ENCODE measurements at regions of chr6 and their contacts with region 1.

Region 1: GRCh38 chr6:132715204-132715603 is 1.3 kb upstream of the VNN1 start:
- DNase-seq: peak; percentile 54 to 58
- H3K4me3 ChIP-seq: no peak overlapping the region
- H3K27ac ChIP-seq: no peak overlapping the region
- H3K4me1 ChIP-seq: no peaks in the 10 kb centered on the region
- H3K27me3 ChIP-seq: no peaks in the 10 kb centered on the region
- CTCF ChIP-seq: peak; percentile 55 to 77 (median 74)
- EP300 ChIP-seq: no peak
- POLR2A ChIP-seq: no peak
- RAD21 ChIP-seq: peak; percentile 90 to 95

Region 2: DNA sequence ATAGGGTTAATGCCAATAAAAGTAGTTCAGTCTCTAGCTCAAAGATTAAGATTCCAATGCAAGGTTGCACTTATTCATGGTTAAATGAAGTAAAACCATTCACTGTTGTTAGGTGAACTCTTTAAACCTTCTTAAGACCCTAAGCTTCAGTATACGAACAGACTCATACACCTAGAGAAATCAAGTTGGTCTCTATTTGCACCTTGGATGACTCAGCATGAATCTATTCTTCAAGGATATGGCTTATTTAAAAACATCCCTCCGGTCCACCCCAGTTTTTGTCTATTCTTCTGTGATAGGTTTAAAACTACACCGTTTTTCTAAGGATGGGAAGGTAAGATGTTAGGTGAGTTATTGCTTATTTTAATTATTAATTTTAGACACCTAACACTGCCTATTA is 178.1 kb before region 1 on chr6:
- CTCF ChIA-PET with region 1: interaction called, 11 read pairs
- POLR2A ChIA-PET with region 1: no interaction called
- DNase-seq: no peak
- H3K4me3 ChIP-seq: no peak overlapping the region
- H3K27ac ChIP-seq: no peak overlapping the region
- H3K4me1 ChIP-seq: no peaks in the 10 kb centered on the region
- H3K27me3 ChIP-seq: no peaks in the 10 kb centered on the region
- CTCF ChIP-seq: no peak
- EP300 ChIP-seq: no peak
- POLR2A ChIP-seq: no peak
- RAD21 ChIP-seq: no peak

Region 3: DNA sequence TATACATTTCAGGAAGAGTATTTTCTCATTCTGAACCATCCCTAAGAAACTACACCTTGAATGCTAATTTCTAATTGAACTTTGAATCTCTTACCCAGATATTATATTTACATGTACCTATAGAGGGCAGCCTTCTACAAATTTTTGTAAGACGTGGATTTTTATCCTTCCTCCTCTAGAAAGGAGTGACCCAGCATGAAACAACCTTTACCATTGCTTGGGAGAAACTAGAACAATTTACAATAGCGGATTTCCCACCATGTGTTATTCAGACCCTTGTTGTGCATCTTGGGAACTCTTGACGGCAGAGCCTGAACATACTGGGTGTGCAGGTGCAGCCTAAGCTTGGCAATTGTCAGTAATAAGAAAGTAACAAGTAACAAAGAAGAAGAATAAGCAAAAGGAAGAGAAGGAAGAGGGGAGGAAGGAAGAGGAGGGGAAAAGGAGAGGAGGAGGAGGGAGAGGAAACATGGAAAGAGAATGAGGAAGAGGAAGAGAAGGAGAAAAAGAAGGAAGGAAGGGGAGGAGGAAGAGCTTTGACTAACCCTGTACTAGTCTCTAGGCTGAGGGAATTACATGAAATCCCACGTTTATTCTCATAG is 45.4 kb before region 1 on chr6:
- CTCF ChIA-PET with region 1: interaction called, 10 read pairs
- POLR2A ChIA-PET with region 1: no interaction called
- DNase-seq: no peak
- H3K4me3 ChIP-seq: no peak overlapping the region
- H3K27ac ChIP-seq: no peak overlapping the region
- H3K4me1 ChIP-seq: peaks cover 0 to 6% (median 0%) of the 10 kb centered on the region in 4 experiments; a peak in 2 of 7 replicates
- H3K27me3 ChIP-seq: no peaks in the 10 kb centered on the region
- CTCF ChIP-seq: peak in 2 of 3 experiments; percentile 8 to 25; a peak in 2 of 4 replicates
- EP300 ChIP-seq: no peak
- POLR2A ChIP-seq: no peak
- RAD21 ChIP-seq: peak; percentile 40 to 49

Region 4: GRCh38 chr6:132725471-132725870 is 10.3 kb after region 1 on chr6:
- CTCF ChIA-PET with region 1: interaction called, 38 read pairs
- POLR2A ChIA-PET with region 1: interaction called, 3 read pairs
- DNase-seq: no peak
- H3K4me3 ChIP-seq: no peak overlapping the region
- H3K27ac ChIP-seq: no peak overlapping the region
- H3K4me1 ChIP-seq: no peaks in the 10 kb centered on the region
- H3K27me3 ChIP-seq: no peaks in the 10 kb centered on the region
- CTCF ChIP-seq: no peak
- EP300 ChIP-seq: no peak
- POLR2A ChIP-seq: no peak
- RAD21 ChIP-seq: no peak

Measured in H1 (cell line).